Dorsolateral prefrontal cortex (tissue), 120 donors: ENCODE measurements at regions of chr10 and their contacts with region 1.

Region 1: DNA sequence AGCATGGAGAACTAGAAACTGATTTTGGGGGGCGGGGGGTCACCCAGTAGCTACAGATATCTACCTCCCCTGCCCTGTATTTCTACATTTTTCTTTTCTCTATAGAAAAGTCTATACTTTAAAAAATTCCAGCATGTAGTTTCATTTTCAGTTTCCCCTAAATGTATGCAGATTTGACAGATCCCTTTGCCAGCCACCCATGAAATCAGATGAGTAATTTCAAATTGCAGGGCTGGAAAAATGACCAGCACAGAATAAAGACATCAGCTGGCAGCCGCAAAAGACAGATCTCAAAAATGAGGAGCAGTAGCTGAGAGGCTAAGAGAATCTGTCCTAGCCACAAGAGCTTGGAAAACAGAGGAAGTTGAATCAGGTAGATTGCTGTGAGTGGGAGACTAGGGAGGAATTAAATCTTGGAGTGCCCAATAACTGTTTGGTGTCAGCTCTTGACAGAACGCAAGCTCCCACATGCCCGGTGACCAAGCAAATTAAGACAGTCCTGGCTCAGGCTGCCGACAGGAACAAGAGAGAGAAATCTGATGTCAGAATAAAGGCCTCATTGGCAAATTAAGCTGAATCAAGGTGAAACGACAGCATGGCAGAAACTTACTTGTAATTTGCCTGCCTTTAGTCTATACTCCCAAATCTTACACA is 24.5 kb downstream of the ADRB1 start:
- DNase-seq: peak in 2 of 10 donors; percentile 18 to 58
- H3K4me3 ChIP-seq: peak overlapping the region in 4 of 59 donors; percentile 0 to 14 (median 9)
- H3K27ac ChIP-seq: peak overlapping the region in 57 of 59 donors; percentile 8 to 91 (median 75)
- H3K27me3 ChIP-seq: no peaks in the 10 kb centered on the region
- CTCF ChIP-seq: no peak

Region 2: GRCh38 chr10:113978802-113979201 is 89.4 kb before region 1 on chr10:
- intact Hi-C with region 1: loop called in 1 of 2 experiments (anchors 2 kb)
- DNase-seq: peak in 9 of 10 donors; percentile 54 to 79 (median 71)
- H3K4me3 ChIP-seq: peak overlapping the region in 13 of 59 donors; percentile 1 to 37 (median 8)
- H3K27ac ChIP-seq: peak overlapping the region in 55 of 59 donors; percentile 8 to 92 (median 77)
- H3K27me3 ChIP-seq: no peaks in the 10 kb centered on the region
- CTCF ChIP-seq: peak in 10 of 56 donors; percentile 9 to 57 (median 27)

Region 3: GRCh38 chr10:114121031-114121430 is 52.9 kb after region 1 on chr10:
- intact Hi-C with region 1: no loop called
- DNase-seq: no peak
- H3K4me3 ChIP-seq: no peak overlapping the region
- H3K27ac ChIP-seq: no peak overlapping the region
- H3K27me3 ChIP-seq: no peaks in the 10 kb centered on the region
- CTCF ChIP-seq: peak in 23 of 56 donors; percentile 6 to 38 (median 22)

Region 4: GRCh38 chr10:114902151-114902550 is 834.0 kb after region 1 on chr10:
- intact Hi-C with region 1: no loop called
- DNase-seq: no peak
- H3K4me3 ChIP-seq: no peak overlapping the region
- H3K27ac ChIP-seq: no peak overlapping the region
- H3K27me3 ChIP-seq: peaks cover 0 to 4% (median 0%) of the 10 kb centered on the region in 45 donors
- CTCF ChIP-seq: no peak